Activated CD4-positive, alpha-beta memory T cell treated with anti-CD3 and anti-CD28 coated beads for 36 hours (primary cell): ENCODE measurements at regions of chr14 and their contacts with region 1.

Region 1: GRCh38 chr14:95452176-95452892 is 64.1 kb downstream of the SYNE3 start:
- DNase-seq: no peak
- H3K4me3 Mint-ChIP-seq: no peak overlapping the region
- H3K27ac Mint-ChIP-seq: no peak overlapping the region
- H3K4me1 Mint-ChIP-seq: no peaks in the 10 kb centered on the region
- H3K27me3 Mint-ChIP-seq: no peaks in the 10 kb centered on the region

Region 2: GRCh38 chr14:95431199-95432143 is 20.9 kb before region 1 on chr14:
- CTCF ChIA-PET with region 1: interaction called, 15 read pairs
- POLR2A ChIA-PET with region 1: no interaction called
- intact Hi-C with region 1: no loop called
- DNase-seq: peak; percentile 12
- H3K4me3 Mint-ChIP-seq: no peak overlapping the region
- H3K27ac Mint-ChIP-seq: no peak overlapping the region
- H3K4me1 Mint-ChIP-seq: no peaks in the 10 kb centered on the region
- H3K27me3 Mint-ChIP-seq: no peaks in the 10 kb centered on the region

Region 3: DNA sequence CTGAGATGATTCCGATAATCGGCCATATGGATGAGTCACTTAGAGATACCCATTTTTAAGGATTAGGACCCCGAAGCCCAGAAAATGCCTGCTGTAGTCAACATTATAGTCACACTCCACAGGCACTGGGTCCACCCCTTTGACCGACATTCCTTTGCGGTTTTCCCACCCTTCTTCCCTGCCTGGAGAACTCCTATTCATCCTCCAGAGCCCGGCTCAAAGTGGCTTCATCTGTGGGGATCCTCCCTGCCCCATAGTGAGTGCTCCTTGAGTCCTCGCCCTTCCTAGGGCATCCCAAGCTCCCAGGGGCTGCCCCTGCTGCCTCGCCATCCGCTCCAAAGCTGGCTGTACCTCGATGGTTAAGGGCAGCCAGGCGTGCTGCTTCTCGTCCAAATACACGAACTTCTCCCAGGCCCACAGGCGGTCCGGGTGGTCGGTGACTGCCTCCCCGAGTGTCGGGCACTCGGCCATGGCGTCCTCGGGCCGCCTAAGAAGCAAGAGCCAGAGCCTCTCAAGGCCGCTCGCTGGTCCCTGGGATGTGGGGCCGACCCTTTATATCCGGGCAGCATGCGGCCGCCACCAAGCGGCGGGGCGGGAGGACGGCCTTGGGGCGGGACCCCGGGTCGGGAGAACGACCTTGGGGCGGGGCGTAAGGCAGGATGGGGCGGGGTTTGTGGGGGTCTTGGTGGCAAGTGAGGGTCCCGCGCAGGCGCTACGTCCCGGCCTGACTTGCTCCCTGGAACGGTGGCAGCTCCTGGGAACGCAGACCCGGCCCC is 261.4 kb after region 1 on chr14 and contains the start of gene TCL1A:
- CTCF ChIA-PET with region 1: no interaction called
- POLR2A ChIA-PET with region 1: no interaction called
- intact Hi-C with region 1: no loop called
- DNase-seq: no peak
- H3K4me3 Mint-ChIP-seq: no peak within 1 kb of the TSS
- H3K27ac Mint-ChIP-seq: no peak within 1 kb of the TSS
- H3K4me1 Mint-ChIP-seq: no peaks in the 10 kb centered on the region
- H3K27me3 Mint-ChIP-seq: peaks cover 18% of the 10 kb centered on the region
- total RNA-seq, gene TCL1A: not detected